ENCODE measurements at regions of chr1 and their contacts with region 1.

Region 1: GRCh38 chr1:110872745-110873720 is at the start of gene CD53:
- DNase-seq: peak; percentile 72
- H3K4me3 Mint-ChIP-seq: peak within 1 kb of the TSS; percentile 91
- H3K27ac Mint-ChIP-seq: peak within 1 kb of the TSS; percentile 99
- H3K4me1 Mint-ChIP-seq: peaks cover 39% of the 10 kb centered on the region
- H3K27me3 Mint-ChIP-seq: no peaks in the 10 kb centered on the region
- total RNA-seq, gene CD53: 239 to 255 TPM

Region 2: GRCh38 chr1:110630839-110631663 is 242.0 kb before region 1 on chr1:
- CTCF ChIA-PET with region 1: no interaction called
- intact Hi-C with region 1: loop called (anchors 1 kb)
- DNase-seq: peak; percentile 92
- H3K4me3 Mint-ChIP-seq: no peak overlapping the region
- H3K27ac Mint-ChIP-seq: no peak overlapping the region
- H3K4me1 Mint-ChIP-seq: peaks cover 54% of the 10 kb centered on the region
- H3K27me3 Mint-ChIP-seq: no peaks in the 10 kb centered on the region

Region 3: DNA sequence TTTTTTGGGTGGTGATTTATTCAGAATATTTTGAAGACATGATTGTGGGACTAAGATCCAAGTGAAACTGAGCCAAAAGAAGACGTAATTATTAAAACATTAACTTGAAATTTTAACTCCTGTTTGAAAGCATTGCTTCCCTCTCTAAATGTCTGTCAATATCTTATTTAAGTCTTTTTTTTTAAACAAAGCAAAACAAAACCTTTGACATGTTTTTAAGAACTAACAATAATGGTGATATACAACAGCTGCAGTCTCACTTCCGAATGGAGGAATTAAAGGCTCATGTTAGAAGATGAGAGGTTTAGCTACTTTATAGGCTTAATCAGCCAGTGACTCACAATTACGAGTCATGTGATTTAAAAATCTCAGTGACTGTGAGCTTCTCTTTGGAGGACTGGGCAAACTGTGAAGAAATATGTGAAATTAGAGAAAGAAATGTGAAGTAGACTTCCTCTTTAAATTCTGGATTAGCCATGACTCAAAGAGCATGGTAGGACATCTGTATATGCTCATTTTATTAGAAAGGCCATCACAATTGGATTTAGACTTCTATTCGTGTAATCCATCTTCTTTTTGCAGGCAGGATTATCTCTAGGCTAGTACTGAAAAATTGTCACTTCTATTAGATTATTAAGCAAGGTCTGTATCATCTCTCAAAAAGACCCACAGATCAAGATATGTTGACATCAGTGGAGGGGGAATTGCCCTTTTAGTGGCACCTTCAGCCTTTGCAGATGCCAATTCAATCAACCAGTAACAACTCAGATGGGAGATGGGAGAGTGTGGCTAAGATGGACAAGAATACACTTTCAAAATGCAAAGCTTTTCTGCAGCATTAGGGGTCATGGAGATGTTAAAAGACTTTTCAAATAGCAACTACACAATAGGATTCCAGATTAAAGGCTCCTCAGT is 227.0 kb before region 1 on chr1:
- CTCF ChIA-PET with region 1: no interaction called
- intact Hi-C with region 1: loop called (anchors 1 kb)
- DNase-seq: no peak
- H3K4me3 Mint-ChIP-seq: peak overlapping the region; percentile 28
- H3K27ac Mint-ChIP-seq: no peak overlapping the region
- H3K4me1 Mint-ChIP-seq: peaks cover 55% of the 10 kb centered on the region
- H3K27me3 Mint-ChIP-seq: no peaks in the 10 kb centered on the region

Region 4: GRCh38 chr1:110859062-110859461 is 14.0 kb before region 1 on chr1:
- CTCF ChIA-PET with region 1: no interaction called
- intact Hi-C with region 1: no loop called
- DNase-seq: no peak
- H3K4me3 Mint-ChIP-seq: no peak overlapping the region
- H3K27ac Mint-ChIP-seq: no peak overlapping the region
- H3K4me1 Mint-ChIP-seq: peaks cover 21% of the 10 kb centered on the region
- H3K27me3 Mint-ChIP-seq: peaks cover 2% of the 10 kb centered on the region

Region 5: DNA sequence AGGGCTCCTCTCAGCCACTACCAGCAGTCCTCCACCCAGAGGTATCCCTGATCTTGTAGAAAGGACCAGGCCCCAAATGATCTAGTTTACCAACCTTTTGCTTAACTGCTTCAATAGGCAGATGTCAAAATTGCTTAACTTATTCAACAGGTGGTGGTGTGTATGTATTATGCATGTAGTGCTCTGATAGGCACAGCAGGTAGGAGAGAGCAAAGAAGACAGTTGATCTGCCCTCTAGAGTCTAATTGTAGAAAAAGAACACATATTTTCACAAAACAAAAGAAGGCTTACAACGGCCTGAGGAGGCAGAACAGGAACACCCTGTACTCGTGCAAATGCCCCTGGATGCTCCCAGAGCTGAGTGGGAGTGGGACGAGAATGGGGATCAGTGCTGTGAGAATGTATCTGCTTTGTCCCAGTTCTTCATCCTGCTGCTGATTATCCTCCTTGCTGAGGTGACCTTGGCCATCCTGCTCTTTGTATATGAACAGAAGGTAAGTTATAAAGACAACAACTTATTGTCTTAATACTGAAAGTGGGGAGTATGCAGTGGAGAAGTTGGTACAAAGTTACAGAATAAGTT is 21.0 kb after region 1 on chr1:
- CTCF ChIA-PET with region 1: interaction called, 4 read pairs
- intact Hi-C with region 1: loop called (anchors 1 kb)
- DNase-seq: no peak
- H3K4me3 Mint-ChIP-seq: no peak overlapping the region
- H3K27ac Mint-ChIP-seq: peak overlapping the region; percentile 74
- H3K4me1 Mint-ChIP-seq: peaks cover 89% of the 10 kb centered on the region
- H3K27me3 Mint-ChIP-seq: no peaks in the 10 kb centered on the region

Region 6: GRCh38 chr1:110916669-110917306 is 43.8 kb after region 1 on chr1:
- CTCF ChIA-PET with region 1: no interaction called
- intact Hi-C with region 1: no loop called
- DNase-seq: peak; percentile 52
- H3K4me3 Mint-ChIP-seq: peak overlapping the region; percentile 10
- H3K27ac Mint-ChIP-seq: peak overlapping the region; percentile 15
- H3K4me1 Mint-ChIP-seq: peaks cover 14% of the 10 kb centered on the region
- H3K27me3 Mint-ChIP-seq: peaks cover under 1% of the 10 kb centered on the region

Region 7: DNA sequence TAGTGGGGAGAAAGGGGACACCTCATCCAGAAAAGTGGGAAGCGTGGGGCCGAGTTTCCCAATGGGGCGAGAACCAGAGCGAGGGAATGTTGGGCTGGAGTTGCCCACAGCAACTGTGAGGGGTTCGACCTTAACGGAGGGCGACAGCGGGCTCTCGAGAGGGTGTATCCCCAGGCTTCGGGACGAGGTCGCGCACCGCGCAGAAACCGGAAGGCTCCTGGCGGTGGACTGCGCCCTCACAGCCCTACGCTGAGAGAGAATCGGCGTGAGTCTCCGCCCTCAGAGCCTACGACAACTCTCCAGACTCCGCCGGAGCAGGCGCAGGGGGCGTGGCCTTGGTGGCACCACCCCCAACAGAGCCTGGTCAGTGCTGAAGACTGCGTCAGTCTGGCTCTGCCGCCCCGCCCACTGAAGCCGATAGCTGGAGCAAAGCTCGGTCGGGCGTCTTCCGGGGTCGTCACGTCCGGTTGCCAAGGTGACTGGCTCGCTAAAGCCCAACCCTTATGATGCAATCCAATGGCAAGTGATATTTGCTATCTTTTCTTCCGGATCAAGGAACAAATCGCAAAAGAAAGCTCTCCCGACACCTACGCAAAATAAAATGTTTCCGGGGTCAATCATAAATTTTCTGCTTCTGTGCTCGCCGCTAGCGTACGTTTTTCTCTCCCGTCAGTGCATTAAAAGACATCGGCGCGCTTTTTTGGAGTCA is 90.8 kb after region 1 on chr1 and contains the start of gene LRIF1:
- CTCF ChIA-PET with region 1: interaction called, 3 read pairs
- intact Hi-C with region 1: loop called (anchors 1 kb)
- DNase-seq: peak; percentile 100
- H3K4me3 Mint-ChIP-seq: peak within 1 kb of the TSS; percentile 83
- H3K27ac Mint-ChIP-seq: peak within 1 kb of the TSS; percentile 96
- H3K4me1 Mint-ChIP-seq: peaks cover 34% of the 10 kb centered on the region
- H3K27me3 Mint-ChIP-seq: peaks cover 8% of the 10 kb centered on the region
- total RNA-seq, gene LRIF1: 12.0 to 12.3 TPM

Region 8: DNA sequence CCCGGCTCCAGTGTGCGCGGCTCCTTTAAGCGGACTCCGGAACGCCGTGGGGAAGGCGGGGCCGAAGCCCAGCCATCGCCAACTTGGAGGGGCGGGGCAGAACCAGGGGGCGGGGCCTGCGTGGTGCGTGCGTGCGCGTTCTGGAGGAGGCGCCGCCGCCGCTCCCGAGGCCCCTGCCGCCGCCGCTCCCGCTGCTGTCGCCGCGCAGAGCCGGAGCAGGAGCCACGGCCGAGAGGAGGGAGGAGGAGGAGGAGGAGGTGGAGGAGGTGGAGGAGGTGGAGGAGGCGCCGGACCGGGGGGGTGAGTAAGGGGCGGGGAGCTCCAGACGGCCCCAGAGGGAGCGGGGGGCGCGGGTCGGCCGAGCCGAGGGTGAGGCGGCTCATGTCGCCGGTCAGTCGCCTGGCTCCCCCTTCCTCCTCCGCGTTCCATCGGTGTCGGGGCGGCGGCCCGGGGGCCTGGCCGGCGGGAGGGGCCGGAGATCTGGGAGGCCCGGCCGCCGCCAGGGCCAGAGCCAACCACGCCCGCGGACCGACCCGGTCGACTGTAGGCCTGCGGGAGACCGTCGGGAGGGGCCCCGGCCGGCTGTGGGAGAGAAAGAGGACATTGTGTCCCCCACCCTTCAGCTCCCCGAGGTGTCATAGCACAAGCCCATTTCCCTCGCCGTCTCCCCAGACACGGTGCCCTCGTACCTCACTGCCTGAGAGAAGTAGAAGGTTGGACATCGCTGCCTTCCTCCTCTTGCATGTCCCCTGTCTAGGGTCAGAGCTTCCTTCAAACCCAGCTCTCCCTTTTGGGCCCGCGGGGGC is 746.8 kb after region 1 on chr1 and contains the start of gene RAP1A:
- CTCF ChIA-PET with region 1: no interaction called
- intact Hi-C with region 1: loop called (anchors 10 kb)
- DNase-seq: peak; percentile 97
- H3K4me3 Mint-ChIP-seq: peak within 1 kb of the TSS; percentile 93
- H3K27ac Mint-ChIP-seq: peak within 1 kb of the TSS; percentile 96
- H3K4me1 Mint-ChIP-seq: peaks cover 68% of the 10 kb centered on the region
- H3K27me3 Mint-ChIP-seq: no peaks in the 10 kb centered on the region
- total RNA-seq, gene RAP1A: 152 to 155 TPM

Measured in activated naive CD4-positive, alpha-beta T cell treated with anti-CD3 and anti-CD28 coated beads for 36 hours (primary cell).